Right ventricle myocardium inferior (tissue), 1 donor: ENCODE measurements at regions of chr9 and their contacts with region 1.

Region 1: GRCh38 chr9:12464910-12465512 is 228.2 kb upstream of the TYRP1 start:
- DNase-seq: no peak
- ATAC-seq: no peak

Region 2: DNA sequence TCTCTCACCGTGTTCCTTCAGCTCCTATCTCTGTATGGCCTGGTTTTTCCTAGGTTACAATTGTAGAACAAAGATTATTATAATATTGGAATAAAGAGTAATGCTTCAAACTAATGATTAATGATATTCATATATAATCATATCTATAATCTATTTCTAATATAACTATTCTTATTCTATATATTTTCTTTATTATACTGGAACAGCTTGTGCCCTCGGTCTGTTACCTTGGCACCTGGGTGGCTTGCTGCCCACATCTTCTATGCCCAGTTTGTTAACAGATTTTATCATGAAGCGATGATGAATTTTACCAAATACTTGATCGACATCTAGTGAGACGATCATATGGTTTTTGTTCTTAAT is 135.4 kb before region 1 on chr9:
- intact Hi-C with region 1: loop called (anchors 10 kb)
- DNase-seq: no peak
- ATAC-seq: no peak